ENCODE measurements at regions of chr21 and their contacts with region 1.

Region 1: DNA sequence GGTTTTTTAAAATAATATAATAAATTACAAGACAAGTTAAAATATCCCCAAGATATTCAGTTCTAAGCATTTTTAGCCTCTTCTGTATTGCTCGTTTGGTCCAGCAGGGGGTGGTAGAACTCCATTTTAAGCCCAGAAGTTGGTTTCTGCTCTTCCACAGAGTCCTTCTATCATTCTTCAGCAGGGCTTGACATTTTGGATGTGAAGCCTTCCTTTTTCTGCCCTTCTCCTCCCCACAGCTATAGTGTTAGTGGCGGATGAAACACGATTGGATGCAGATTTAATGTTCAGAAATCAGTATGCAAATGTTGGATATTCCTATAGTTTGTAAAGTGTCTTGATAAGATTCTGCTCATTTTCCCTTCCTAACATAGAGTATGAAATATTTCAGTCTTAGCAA is 1.4 kb downstream of the NCAM2 start:
- DNase-seq: peak; percentile 60
- H3K4me3 Mint-ChIP-seq: no peak overlapping the region
- H3K27ac Mint-ChIP-seq: no peak overlapping the region
- H3K4me1 Mint-ChIP-seq: peaks cover 12% of the 10 kb centered on the region
- H3K27me3 Mint-ChIP-seq: peaks cover 34% of the 10 kb centered on the region

Region 2: GRCh38 chr21:21101911-21102310 is 102.3 kb after region 1 on chr21:
- CTCF ChIA-PET with region 1: interaction called, 3 read pairs
- intact Hi-C with region 1: loop called (anchors 1 kb)
- DNase-seq: peak; percentile 5
- H3K4me3 Mint-ChIP-seq: no peak overlapping the region
- H3K27ac Mint-ChIP-seq: no peak overlapping the region
- H3K4me1 Mint-ChIP-seq: no peaks in the 10 kb centered on the region
- H3K27me3 Mint-ChIP-seq: no peaks in the 10 kb centered on the region

Region 3: DNA sequence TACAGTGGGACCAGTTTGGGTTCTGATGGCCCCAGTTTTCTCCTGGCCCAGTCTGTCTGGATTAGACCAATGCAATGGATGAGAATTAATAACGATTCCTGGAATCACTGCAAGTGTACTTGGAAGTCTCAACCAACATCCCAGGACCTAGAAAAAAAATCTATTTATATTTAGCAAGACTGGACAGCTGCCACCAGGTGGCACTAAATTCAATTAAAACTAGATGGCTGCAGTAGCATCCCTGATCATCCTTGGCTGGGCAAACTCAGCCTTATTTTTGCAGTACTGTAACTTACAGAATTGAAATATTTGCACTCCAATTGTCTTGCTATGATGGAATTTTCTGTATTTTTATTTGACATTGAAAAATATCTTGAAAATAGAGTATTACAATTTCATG is 164.2 kb after region 1 on chr21:
- CTCF ChIA-PET with region 1: no interaction called
- intact Hi-C with region 1: loop called (anchors 1 kb)
- DNase-seq: peak; percentile 51
- H3K4me3 Mint-ChIP-seq: no peak overlapping the region
- H3K27ac Mint-ChIP-seq: no peak overlapping the region
- H3K4me1 Mint-ChIP-seq: no peaks in the 10 kb centered on the region
- H3K27me3 Mint-ChIP-seq: no peaks in the 10 kb centered on the region

Region 4: GRCh38 chr21:21373969-21374368 is 374.3 kb after region 1 on chr21:
- CTCF ChIA-PET with region 1: no interaction called
- intact Hi-C with region 1: loop called (anchors 10 kb)
- DNase-seq: no peak
- H3K4me3 Mint-ChIP-seq: no peak overlapping the region
- H3K27ac Mint-ChIP-seq: no peak overlapping the region
- H3K4me1 Mint-ChIP-seq: no peaks in the 10 kb centered on the region
- H3K27me3 Mint-ChIP-seq: no peaks in the 10 kb centered on the region

Region 5: DNA sequence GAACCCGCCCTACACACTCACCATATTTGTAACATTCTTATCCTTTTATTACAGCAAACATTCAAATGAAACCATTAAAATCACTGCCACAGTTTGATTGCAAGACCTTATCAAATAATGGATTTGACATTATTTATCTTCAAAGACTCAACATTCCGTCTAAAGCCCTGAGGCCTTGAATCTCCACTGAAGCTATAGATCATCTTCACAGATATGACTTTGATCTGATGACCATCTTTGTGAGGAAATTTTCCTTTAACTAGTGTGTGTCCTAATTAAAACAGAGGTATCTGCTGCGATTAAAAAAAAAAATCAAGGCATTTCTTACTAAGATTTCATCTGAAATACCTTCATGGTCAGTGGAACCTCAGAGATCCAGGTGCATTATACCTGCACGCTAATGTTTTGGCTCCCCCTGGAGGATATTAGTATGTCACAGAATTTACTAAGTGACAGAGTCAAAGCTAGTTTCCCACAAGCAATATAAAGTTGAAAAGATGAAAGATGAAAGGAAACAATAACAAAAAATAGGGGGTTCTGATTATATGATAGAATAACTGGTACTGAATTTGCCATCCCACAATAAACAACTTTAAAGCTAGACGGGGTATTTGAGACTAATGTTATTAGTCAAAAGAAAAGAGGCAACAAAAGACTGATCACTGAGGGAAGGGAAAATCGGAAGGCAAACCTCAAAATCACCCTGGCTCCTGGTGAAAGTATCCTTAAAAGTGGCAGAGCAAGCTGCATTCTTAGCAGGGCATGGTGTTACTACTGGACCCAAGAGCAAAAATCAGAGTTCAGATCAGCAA is 922.0 kb after region 1 on chr21:
- CTCF ChIA-PET with region 1: interaction called, 5 read pairs
- intact Hi-C with region 1: loop called (anchors 1 kb)
- DNase-seq: no peak
- H3K4me3 Mint-ChIP-seq: no peak overlapping the region
- H3K27ac Mint-ChIP-seq: no peak overlapping the region
- H3K4me1 Mint-ChIP-seq: no peaks in the 10 kb centered on the region
- H3K27me3 Mint-ChIP-seq: peaks cover 4% of the 10 kb centered on the region